Activated CD4-positive, alpha-beta T cell treated with anti-CD3 and anti-CD28 coated beads for 36 hours (primary cell): ENCODE measurements at regions of chr11 and their contacts with region 1.

Region 1: DNA sequence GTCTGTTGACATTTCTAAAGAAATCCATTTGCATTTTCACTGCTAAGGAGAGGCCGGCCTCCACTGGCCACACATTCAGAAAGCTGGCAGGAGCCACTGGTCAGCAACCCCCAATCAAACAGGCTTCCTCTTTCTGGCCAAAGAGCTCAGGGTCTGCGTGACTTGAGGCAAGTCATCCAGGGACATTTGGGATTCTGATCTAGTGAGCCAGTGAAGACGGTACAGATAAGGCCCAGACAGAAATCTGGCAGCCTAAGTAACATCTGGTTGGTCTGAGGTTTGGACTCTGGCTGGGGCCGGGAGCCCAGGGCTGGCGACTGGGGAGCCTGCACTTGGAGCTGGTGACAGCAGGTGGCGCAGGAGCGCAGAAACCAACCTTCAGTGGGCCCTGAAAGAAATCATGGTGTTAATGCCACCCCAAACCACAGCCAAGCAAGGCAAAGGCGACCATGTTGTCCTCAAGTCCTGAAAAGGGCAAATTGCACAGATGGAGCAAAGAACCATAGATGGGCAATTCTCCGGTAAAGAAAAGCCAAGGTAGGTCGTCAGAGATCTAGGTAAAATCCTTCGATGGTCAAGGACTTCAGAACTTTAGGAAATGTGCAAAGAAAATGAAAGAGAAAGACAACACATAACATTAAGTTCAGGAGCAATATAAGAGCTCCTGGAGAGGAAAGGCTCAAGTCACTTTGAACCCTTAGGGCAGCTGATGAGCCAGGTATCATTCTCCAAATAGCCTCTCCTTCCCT is 99.4 kb upstream of the BLID start:
- DNase-seq: peak; percentile 63
- ATAC-seq: peak; percentile 53
- H3K4me3 Mint-ChIP-seq: no peak overlapping the region
- H3K27ac Mint-ChIP-seq: no peak overlapping the region
- H3K4me1 Mint-ChIP-seq: no peaks in the 10 kb centered on the region
- H3K27me3 Mint-ChIP-seq: peaks cover 7% of the 10 kb centered on the region

Region 2: DNA sequence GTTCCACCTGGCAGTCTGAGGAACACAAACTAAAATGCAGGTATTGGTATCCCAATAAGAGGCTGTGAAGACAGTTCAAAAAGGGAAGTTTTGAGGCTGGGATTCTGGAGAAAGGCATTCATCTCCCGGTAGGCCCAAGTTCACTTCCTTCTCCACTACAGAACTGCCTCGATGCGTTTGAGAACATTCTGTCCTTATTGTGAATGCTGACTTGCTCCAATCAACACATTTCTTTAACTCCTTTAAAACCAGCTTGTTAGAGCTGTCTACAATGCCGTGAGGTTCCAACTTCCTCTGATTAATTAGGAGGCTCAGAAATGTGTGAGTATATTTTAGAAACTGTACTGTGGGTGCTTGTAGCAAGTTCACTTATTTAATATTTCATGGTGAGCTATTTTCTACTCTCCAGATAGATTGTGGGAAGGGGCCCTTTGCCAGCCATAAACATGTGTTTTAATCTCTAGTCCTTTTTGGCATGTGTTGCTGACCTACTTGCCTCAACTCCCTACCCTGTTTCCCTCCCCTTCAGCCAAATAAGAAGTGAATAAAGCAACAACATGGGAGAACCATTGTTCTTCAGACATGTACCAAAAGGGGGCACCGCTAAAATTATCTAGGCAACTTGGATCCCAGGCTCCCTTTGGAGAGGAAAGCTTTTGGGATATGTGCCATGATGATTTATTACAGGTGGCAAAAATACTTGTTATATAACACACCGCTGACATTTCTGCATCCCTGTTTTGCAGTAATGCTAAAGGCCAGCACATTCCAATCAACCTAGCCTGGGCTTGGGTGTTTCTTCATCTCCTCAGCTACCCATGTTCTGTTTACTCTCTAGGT is 345.0 kb before region 1 on chr11:
- CTCF ChIA-PET with region 1: no interaction called
- POLR2A ChIA-PET with region 1: no interaction called
- intact Hi-C with region 1: no loop called
- DNase-seq: no peak
- ATAC-seq: no peak
- H3K4me3 Mint-ChIP-seq: no peak overlapping the region
- H3K27ac Mint-ChIP-seq: no peak overlapping the region
- H3K4me1 Mint-ChIP-seq: no peaks in the 10 kb centered on the region
- H3K27me3 Mint-ChIP-seq: no peaks in the 10 kb centered on the region

Region 3: DNA sequence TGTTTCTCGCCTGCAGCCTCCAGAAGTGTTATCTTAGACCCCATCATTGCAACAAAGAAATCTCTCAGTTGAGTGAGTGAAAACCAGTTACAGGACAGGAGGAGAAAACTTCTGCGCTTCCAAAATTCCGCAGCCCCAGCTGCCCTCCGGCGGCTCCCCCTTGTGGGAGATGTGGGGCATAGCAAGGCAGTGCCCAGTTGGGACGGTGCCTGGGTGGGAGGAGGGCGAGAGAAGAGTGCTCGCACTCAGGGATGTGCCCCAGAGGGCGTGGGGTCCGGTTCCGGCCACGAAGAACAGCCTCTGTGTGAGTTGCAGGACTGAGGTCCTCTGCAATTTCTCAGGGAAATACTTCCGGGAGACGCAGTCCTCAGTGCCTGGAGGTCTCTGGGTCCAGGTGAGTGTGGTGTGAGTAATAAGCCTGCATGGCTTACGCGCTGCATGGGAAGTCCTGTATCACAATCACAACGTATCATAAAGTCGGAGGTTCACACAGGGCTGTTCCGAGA is 12.4 kb before region 1 on chr11:
- CTCF ChIA-PET with region 1: interaction called, 20 read pairs
- POLR2A ChIA-PET with region 1: no interaction called
- intact Hi-C with region 1: no loop called
- DNase-seq: peak; percentile 69
- ATAC-seq: peak; percentile 74
- H3K4me3 Mint-ChIP-seq: no peak overlapping the region
- H3K27ac Mint-ChIP-seq: no peak overlapping the region
- H3K4me1 Mint-ChIP-seq: no peaks in the 10 kb centered on the region
- H3K27me3 Mint-ChIP-seq: peaks cover 34% of the 10 kb centered on the region

Region 4: DNA sequence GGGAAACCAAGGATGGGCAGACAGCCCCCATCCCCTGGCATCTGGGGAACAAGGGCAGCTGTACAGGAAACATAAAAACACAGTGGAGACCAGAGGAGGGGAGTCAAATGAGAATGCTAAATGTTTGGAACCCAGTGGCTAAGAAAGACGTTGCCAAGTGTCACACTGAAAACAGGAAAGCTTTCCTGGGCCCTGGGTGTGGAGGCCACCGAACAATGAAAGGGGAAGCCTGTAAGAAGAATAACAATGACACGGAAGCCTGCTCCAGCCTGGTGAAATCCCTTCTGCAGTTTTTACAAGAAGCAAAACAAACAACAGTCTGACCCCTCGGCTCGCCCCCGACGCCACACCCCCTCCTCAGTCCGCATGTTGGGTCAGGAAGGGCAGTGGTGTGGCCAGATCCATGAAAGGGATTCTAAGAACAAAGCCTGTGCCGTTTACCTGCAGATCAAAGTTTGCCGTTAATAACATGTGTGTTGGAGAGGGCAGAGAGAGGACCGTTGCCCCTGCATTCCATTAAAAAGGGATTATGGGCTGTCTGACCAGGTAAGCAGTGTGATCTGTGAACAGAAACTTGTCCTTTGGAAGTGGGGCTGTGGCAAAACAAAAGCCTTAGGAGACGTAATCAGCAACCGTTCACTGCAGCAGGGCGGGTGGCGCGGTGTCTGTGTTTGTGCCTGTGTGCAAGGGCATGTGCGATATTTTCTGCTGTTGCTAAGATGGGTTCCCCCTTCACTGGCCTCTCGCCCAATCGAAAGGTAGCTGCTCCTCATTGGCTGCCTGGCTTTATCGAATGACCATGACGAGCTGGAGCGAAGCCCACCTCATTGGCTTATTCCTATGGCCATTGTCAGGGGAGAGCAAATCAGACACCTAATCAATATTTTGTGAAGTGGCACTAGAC is 14.3 kb after region 1 on chr11:
- CTCF ChIA-PET with region 1: interaction called, 10 read pairs
- POLR2A ChIA-PET with region 1: no interaction called
- intact Hi-C with region 1: no loop called
- DNase-seq: no peak
- ATAC-seq: no peak
- H3K4me3 Mint-ChIP-seq: no peak overlapping the region
- H3K27ac Mint-ChIP-seq: no peak overlapping the region
- H3K4me1 Mint-ChIP-seq: no peaks in the 10 kb centered on the region
- H3K27me3 Mint-ChIP-seq: peaks cover 16% of the 10 kb centered on the region

Region 5: GRCh38 chr11:122505304-122506006 is 290.0 kb after region 1 on chr11:
- CTCF ChIA-PET with region 1: interaction called, 20 read pairs
- POLR2A ChIA-PET with region 1: no interaction called
- intact Hi-C with region 1: loop called (anchors 1 kb)
- DNase-seq: peak; percentile 78
- ATAC-seq: peak; percentile 77
- H3K4me3 Mint-ChIP-seq: no peak overlapping the region
- H3K27ac Mint-ChIP-seq: no peak overlapping the region
- H3K4me1 Mint-ChIP-seq: no peaks in the 10 kb centered on the region
- H3K27me3 Mint-ChIP-seq: peaks cover 33% of the 10 kb centered on the region